ENCODE measurements at regions of chr5 and their contacts with region 1.

Region 1: GRCh38 chr5:82165740-82166530 is 112.2 kb downstream of the RPS23 start:
- H3K4me3 ChIP-seq: no peak overlapping the region
- H3K27ac ChIP-seq: peak overlapping the region; percentile 45
- H3K4me1 ChIP-seq: peaks cover 19% of the 10 kb centered on the region
- CTCF ChIP-seq: peak; percentile 46; the same call in 1 of the 2 replicates

Region 2: DNA sequence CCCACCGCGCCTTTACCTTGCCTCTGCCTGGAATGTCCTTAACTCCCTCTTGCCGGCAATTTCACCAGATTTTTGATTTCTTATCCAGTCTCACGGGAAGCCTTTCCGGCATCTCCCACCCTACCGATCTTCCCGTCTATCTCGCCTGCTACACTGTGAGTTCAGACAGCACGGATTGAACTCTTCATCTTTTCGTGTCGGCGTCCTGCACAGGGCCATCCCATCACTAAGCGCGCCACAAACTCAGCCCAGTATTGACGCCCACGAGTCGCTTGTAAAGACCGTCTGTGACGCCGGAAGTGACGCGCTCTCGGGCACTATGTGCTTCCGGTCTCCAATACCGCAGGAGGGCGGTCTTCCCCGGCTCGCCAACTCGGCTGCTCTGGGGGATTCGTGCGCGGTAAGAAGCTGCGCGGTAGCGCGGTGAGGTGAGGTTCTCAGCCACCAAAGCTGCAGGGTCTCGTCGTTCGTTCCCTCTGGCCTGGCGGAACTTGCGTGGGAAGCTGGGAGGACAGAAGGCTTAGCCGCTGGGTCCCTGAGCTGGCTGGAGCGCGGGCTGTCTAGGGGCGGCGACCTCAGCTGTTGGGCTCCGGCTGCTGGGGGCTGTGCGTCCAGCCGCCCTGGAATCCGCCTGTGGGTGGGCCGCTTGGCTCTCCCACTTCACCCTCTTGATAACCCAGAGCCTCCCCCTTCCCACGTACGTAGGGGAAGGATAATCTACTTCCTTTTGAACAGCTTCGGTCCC is 864.5 kb before region 1 on chr5 and contains the start of gene ZCCHC9:
- CTCF ChIA-PET with region 1: interaction called, 11 read pairs
- POLR2A ChIA-PET with region 1: interaction called, 4 read pairs
- H3K4me3 ChIP-seq: peak within 1 kb of the TSS; percentile 96
- H3K27ac ChIP-seq: peak within 1 kb of the TSS; percentile 81
- H3K4me1 ChIP-seq: no peaks in the 10 kb centered on the region; the same call in 1 of the 2 replicates
- CTCF ChIP-seq: peak; percentile 88

Region 3: DNA sequence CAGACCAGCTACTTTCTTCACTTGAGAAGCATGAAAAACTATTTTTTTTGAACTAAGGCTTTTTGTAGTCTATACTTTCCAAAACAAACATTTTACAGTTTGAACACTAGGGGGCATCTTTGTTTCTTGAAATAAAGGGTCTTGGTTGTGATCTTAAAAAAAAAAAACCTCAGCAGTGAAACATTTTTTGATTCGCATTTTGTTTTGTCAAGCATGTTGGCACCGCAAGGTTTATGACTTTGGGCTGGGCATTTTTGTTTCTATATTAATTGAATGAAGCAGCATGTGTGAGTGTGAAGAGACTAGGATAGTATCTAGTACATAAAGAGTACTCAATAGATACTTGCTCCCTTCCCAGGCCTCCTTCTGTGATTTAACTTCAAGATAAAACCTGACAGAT is 740.4 kb before region 1 on chr5:
- CTCF ChIA-PET with region 1: interaction called, 26 read pairs
- POLR2A ChIA-PET with region 1: no interaction called
- H3K4me3 ChIP-seq: no peak overlapping the region
- H3K27ac ChIP-seq: no peak overlapping the region
- H3K4me1 ChIP-seq: peaks cover 22% of the 10 kb centered on the region
- CTCF ChIP-seq: no peak

Region 4: DNA sequence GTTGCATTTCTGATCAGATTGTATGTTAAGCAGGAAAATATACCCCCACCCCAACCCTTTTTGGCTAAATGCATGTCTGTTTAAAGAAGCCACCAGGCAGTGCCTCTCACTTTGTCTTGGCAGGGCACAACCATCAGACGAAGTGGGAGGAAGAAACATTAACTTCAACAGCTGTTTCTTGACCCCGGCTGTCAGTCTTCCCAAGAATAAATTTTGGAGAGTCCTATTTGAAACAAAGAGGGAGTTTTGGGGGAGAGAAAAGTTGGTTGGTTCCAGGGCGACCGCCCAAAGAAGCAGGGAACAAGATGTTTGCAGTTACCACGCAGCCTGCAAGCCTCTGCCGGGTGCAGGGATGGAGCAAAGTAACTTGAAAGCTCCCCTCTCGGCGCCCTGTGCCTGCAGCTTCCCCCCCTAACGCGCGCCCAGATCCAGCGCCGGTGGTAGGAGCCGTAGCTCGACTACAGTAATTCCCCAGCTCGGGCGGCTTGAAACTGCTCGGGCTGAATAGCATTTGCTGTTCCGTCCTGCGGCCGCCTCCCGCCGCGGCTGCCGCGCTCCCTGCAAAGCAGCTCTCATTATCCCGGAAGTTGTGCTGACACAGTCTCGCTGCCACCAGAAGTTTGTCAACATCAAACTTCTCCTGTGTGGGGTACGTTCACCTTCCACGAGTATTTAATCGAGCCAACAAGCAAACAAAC is 314.3 kb before region 1 on chr5:
- CTCF ChIA-PET with region 1: interaction called, 10 read pairs
- POLR2A ChIA-PET with region 1: interaction called, 12 read pairs
- H3K4me3 ChIP-seq: peak overlapping the region; percentile 41
- H3K27ac ChIP-seq: peak overlapping the region; percentile 91
- H3K4me1 ChIP-seq: peaks cover 8% of the 10 kb centered on the region
- CTCF ChIP-seq: no peak

Region 5: DNA sequence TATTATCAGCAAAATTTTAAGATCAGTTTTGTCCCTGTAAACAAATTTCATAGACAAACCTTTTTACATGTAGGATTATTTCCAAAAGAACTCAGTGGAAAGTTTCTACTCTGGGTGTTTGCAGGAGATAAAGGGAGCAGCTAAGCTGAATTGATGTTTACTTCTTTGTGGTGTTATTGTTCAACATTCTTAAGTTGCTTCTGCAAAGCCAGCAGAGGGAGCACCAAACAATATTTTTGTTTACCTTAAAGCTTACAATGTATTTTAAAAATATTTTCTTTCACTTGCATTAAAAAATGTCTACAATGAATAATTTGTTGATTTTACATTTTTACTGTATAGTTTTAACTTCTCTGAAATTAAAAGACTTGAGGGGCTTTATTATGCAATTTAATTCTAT is 58.7 kb before region 1 on chr5:
- CTCF ChIA-PET with region 1: interaction called, 33 read pairs
- POLR2A ChIA-PET with region 1: no interaction called
- H3K4me3 ChIP-seq: no peak overlapping the region
- H3K27ac ChIP-seq: no peak overlapping the region
- H3K4me1 ChIP-seq: no peaks in the 10 kb centered on the region
- CTCF ChIP-seq: 0 out of 2 replicates have a peak, but pooled peaks have one; percentile 14